Dorsolateral prefrontal cortex (tissue), 120 donors: ENCODE measurements at regions of chr7 and their contacts with region 1.

Region 1: DNA sequence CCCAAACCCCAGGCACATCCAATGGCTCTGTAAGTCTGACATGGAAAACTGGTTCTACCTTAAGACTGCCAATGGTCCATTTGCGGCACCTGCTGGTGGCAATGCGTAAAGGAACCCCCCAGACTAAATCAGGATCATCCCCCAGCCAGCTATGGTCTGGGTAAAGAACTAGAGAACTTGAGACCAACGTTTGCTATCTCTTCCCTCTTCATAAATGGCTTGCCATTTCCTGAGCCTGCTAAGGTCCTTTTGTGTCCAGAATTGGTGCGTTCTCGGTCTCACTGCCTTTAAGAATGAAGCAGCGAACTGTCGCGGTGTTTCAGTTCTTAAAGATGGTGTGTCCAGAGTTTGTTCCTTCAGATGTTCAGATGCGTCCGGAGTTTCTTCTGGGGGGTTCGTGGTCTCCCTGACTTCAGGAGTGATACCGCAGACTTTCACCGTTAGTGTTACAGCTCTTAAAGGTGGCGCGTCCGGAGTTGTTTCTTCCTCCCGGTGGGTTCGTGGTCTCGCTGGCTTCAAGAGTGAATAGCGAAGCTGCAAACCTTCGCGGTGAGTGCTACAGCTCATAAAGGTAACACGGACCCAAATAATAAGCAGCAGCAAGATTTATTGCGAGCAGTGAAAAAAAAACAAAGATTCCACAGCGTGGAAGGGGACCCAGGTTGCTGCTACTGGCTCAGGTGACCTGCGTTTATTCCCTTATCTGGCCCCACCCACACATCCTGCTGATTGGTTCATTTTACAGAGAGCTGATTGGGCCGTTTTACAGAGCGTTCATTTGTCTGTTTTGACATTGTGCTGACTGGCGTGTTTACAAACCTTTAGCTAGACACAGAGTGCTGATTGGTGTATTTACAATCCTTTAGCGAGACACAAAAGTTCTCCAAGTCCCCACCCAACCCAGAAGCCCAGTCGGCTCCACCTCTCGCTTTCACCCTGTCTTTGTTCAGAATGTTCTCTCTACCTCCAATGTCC is 95.4 kb downstream of the ELMO1 start:
- DNase-seq: no peak
- H3K4me3 ChIP-seq: peak overlapping the region in 20 of 59 donors; percentile 0 to 37 (median 20)
- H3K27ac ChIP-seq: peak overlapping the region in 45 of 59 donors; percentile 3 to 82 (median 64)
- H3K27me3 ChIP-seq: no peaks in the 10 kb centered on the region
- CTCF ChIP-seq: peak in 9 of 56 donors; percentile 5 to 31 (median 15)

Region 2: DNA sequence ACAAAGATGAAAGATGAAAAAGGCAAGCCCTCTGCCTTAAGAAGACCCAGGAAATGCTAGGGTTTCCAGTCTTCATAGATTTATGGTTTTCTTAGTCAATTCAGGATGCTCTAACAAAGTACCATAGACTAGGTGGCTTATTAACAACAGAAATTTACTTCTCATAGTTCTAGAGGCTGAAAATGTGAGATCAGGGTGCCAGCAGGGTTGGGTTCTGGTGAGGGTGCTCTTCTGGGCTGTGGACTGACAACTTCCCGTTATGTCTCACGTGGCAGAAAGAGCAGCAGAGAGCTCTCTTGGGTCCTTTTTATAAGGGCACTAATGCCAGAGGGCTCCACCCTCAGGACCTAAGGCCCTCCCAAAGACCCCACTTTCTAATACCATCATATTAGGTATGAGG is 71.7 kb after region 1 on chr7:
- intact Hi-C with region 1: loop called in 1 of 2 experiments (anchors 5 kb)
- DNase-seq: no peak
- H3K4me3 ChIP-seq: no peak overlapping the region
- H3K27ac ChIP-seq: peak overlapping the region in 18 of 59 donors; percentile 1 to 70 (median 36)
- H3K27me3 ChIP-seq: no peaks in the 10 kb centered on the region
- CTCF ChIP-seq: no peak